ENCODE measurements at regions of chr7 and their contacts with region 1.

Region 1: GRCh38 chr7:130010689-130011412 is 40.3 kb downstream of the ZC3HC1 start:
- DNase-seq: peak; percentile 76
- H3K4me3 Mint-ChIP-seq: no peak overlapping the region
- H3K27ac Mint-ChIP-seq: peak overlapping the region; percentile 75
- H3K4me1 Mint-ChIP-seq: peaks cover 5% of the 10 kb centered on the region
- H3K27me3 Mint-ChIP-seq: no peaks in the 10 kb centered on the region

Region 2: DNA sequence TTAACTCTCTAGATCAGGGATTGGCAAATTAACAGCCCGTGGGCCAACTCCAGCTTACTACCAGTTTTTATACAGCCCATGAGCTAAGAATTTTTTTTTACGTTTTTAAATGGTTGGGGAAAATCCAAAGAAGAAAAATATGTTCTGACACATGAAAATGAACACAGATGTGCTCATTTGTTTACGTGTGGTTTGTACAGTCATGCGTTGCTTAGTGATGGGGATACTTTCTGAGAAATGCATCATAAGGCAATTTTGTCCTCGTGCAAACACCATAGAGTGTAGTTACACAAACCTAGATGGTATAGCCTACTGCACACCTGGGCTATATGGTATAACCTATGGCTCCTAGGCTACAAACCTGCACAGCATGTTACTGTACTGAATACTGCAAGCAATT is 516.8 kb before region 1 on chr7:
- intact Hi-C with region 1: loop called (anchors 10 kb)
- DNase-seq: peak; percentile 24
- H3K4me3 Mint-ChIP-seq: no peak overlapping the region
- H3K27ac Mint-ChIP-seq: peak overlapping the region; percentile 85
- H3K4me1 Mint-ChIP-seq: peaks cover 29% of the 10 kb centered on the region
- H3K27me3 Mint-ChIP-seq: no peaks in the 10 kb centered on the region

Region 3: DNA sequence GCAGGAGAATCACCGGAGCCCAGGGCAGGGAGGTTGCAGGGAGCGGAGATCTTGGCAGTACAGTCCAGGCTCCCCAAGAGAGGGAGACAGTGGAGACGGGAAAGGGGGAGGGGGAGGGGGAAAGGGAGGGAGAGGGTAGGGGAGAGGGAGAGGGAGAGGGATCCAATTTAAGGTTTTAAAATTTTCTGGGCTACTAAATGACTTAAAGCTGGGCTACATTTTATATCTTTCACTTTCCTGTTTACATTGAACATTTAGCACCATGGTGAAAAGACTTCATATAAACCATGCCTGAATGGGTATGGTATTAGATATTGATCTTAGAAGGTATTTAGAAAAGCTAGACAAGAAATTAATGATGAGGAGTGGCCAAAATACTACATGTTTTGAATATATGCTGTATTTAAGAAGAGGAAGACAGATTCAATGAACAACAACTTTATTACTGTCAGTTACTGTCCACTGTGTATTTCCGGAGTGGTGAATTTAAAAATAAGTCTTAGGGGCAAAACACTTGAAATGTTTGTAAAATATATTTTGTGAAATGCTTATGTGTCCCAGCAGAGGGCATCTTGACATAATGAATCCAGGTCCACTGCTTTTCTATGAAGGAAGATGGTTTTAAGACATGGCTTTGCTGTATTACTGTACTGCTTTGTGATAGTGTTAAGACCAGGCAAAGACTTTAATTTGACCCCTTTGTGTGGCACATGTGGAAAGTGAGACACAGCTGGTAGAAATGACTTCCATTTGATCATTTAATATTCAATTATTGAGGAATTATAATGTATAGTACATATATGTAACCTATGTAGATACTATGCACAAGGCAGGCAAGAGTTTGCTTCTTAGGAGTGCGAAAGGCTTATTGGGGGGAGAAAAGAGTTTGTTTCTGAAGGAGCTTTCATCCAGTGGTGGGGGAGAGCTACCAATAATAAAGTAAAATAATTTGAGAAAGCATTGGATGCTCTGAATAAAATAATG is 346.5 kb before region 1 on chr7:
- intact Hi-C with region 1: loop called (anchors 2 kb)
- DNase-seq: no peak
- H3K4me3 Mint-ChIP-seq: no peak overlapping the region
- H3K27ac Mint-ChIP-seq: no peak overlapping the region
- H3K4me1 Mint-ChIP-seq: peaks cover 4% of the 10 kb centered on the region
- H3K27me3 Mint-ChIP-seq: no peaks in the 10 kb centered on the region

Region 4: DNA sequence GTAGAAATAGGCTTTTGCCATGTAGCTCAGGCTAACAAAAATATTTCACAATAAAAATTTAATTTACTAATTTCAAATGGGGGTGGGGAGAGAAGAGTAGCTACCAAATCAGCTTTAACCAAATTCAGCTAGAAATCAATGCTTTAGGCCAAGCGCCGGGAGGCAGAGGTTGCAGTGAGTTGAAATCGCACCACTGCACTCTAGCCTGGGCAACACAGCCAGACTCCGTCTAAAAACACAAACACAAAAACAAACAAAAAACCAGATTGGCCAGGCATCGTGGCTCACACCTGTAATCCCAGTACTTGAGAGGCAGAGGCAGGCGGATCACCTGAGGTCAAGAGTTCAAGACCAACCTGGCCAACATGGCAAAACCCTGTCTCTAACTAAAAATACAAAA is 67.5 kb before region 1 on chr7:
- intact Hi-C with region 1: no loop called
- DNase-seq: no peak
- H3K4me3 Mint-ChIP-seq: no peak overlapping the region
- H3K27ac Mint-ChIP-seq: no peak overlapping the region
- H3K4me1 Mint-ChIP-seq: peaks cover 16% of the 10 kb centered on the region
- H3K27me3 Mint-ChIP-seq: no peaks in the 10 kb centered on the region

Region 5: GRCh38 chr7:129975309-129975708 is 35.5 kb before region 1 on chr7:
- intact Hi-C with region 1: loop called (anchors 2 kb)
- DNase-seq: no peak
- H3K4me3 Mint-ChIP-seq: no peak overlapping the region
- H3K27ac Mint-ChIP-seq: no peak overlapping the region
- H3K4me1 Mint-ChIP-seq: no peaks in the 10 kb centered on the region
- H3K27me3 Mint-ChIP-seq: peaks cover 4% of the 10 kb centered on the region

Region 6: GRCh38 chr7:129989466-129989865 is 21.4 kb before region 1 on chr7:
- intact Hi-C with region 1: no loop called
- DNase-seq: no peak
- H3K4me3 Mint-ChIP-seq: no peak overlapping the region
- H3K27ac Mint-ChIP-seq: no peak overlapping the region
- H3K4me1 Mint-ChIP-seq: no peaks in the 10 kb centered on the region
- H3K27me3 Mint-ChIP-seq: peaks cover 2% of the 10 kb centered on the region

Measured in activated T-helper 1 cell treated with anti-CD3 and anti-CD28 coated beads, Interleukin-12 subunit alpha, Interleukin-12 subunit beta, Interleukin-2, Interleukin-4 antibody, amounts not matched to agents 30 ng/mL and 10 ng/mL and 1 ng/mL, durations not matched to agents 14 hours and 24 hours and 36 hours (primary cell).